WTC11 (cell line): ENCODE measurements at regions of chrX and their contacts with region 1.

Region 1: DNA sequence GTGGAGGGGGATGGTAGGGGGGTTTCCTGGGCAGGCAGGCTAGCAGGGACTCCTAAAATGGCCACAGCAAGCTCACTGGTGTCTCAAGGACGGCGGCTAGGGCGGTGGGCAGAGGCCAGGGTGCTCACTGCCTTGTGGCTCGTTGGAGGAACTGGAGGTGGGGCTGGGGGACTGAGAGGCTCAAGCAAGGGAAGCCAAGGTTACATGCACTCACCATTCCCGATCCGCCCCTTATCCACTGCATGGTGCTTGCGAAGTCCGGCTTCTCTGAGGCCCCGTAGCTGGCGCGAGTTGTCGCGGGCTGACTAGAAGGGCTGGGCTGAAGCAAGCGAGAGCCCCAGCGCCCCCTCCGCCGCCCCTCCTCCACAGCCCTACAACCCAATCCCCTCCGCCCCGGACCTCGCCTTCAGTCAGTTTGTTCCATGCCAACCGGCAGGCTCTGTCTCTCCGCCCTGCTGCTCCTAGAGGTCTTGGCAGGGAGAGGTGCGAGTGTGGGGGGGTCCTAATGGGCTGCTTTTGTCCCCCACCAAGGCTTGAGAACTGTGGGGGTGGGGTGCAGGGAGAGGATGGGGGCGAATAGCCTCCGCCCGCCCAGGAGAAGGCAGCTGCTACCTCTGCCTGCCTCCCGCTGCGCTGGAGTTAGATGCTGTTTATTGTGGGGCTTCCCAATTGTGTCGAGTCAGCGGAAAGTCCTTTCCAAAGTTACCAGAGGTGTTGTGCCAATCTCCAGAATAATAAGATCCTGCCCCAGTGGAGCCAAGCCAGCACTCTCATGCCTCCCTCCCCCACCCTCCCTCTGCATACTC is at the start of gene ARHGEF9:
- DNase-seq: peak; percentile 64
- ATAC-seq: peak; percentile 89
- H3K4me3 Mint-ChIP-seq: peak within 1 kb of the TSS; percentile 67
- H3K27ac Mint-ChIP-seq: peak within 1 kb of the TSS; percentile 57; the same call in 1 of the 2 replicates
- H3K4me1 Mint-ChIP-seq: peaks cover 25% of the 10 kb centered on the region
- H3K27me3 Mint-ChIP-seq: no peaks in the 10 kb centered on the region
- CTCF ChIP-seq: no peak
- total RNA-seq, gene ARHGEF9: 31.3 to 32.1 TPM (median 31.7 TPM) in 3 replicates

Region 2: DNA sequence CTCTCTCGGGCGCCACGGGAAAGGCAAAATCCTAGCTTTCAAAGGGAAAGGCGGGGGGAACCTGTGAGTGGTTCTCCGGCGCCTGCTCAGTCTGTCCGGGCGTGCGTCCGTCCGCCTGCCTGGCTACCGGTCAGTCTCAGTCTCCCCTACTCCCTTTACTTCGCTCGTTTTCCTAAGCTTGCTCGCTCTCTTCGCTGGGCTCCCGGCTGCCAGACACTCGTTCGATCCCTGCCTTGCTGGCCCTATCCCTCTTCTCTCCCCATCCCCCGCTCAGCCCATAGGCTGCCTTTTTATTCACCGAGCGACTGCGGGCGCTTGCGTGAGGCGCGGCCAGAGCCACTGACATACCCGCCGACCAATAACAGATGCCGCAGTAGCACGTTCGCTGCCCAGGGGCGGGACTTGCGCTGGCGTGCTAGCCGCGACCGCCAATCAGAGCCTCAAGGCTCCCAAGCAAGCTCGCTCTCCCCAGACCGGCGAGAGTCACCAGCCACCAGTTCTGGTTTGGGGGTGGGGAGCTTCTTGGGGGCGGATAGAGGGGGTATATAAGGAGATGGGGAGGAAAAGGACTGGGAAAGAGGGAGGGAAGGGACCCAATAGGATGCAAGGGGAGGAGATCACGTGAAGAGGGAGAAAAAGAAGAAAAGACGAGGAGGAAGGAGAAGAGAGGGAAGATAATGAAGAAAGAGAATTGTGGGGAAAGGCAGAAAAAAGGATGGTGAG is 30.1 kb before region 1 on chrX:
- CTCF ChIA-PET with region 1: interaction called, 3 read pairs
- POLR2A ChIA-PET with region 1: interaction called, 14 read pairs
- DNase-seq: peak; percentile 89
- ATAC-seq: peak; percentile 97
- H3K4me3 Mint-ChIP-seq: peak overlapping the region; percentile 94
- H3K27ac Mint-ChIP-seq: peak overlapping the region; percentile 99
- H3K4me1 Mint-ChIP-seq: peaks cover 38% of the 10 kb centered on the region
- H3K27me3 Mint-ChIP-seq: no peaks in the 10 kb centered on the region
- CTCF ChIP-seq: no peak

Region 3: DNA sequence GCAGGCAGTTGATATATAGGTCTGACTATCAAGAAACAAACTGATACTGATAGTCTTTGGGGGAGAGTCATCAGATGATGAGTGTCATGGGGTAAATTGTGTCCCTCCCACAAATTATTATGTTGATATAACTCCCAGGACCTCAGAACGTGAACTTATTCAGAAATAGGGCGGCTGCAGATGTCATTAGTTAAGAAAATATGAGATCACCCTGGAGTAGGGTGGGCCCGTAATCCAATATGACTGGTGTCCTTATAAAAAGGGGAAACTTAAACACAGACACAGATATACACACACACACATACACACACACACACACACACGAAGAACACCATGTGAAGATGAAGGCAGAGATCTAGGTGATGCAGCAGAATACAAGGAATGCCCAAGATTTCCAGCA is 32.6 kb after region 1 on chrX:
- CTCF ChIA-PET with region 1: no interaction called
- POLR2A ChIA-PET with region 1: no interaction called
- DNase-seq: no peak
- ATAC-seq: no peak
- H3K4me3 Mint-ChIP-seq: no peak overlapping the region
- H3K27ac Mint-ChIP-seq: no peak overlapping the region
- H3K4me1 Mint-ChIP-seq: no peaks in the 10 kb centered on the region
- H3K27me3 Mint-ChIP-seq: no peaks in the 10 kb centered on the region
- CTCF ChIP-seq: no peak